ENCODE measurements at regions of chr14 and their contacts with region 1.

Region 1: GRCh38 chr14:23320774-23321571 is at the start of gene PABPN1:
- DNase-seq: peak; percentile 99
- total RNA-seq, gene PABPN1: 82.9 TPM

Region 2: GRCh38 chr14:23034483-23035302 is 286.3 kb before region 1 on chr14 and contains the start of gene PSMB5:
- intact Hi-C with region 1: no loop called
- DNase-seq: peak; percentile 95
- total RNA-seq, gene PSMB5: 120 TPM

Region 3: DNA sequence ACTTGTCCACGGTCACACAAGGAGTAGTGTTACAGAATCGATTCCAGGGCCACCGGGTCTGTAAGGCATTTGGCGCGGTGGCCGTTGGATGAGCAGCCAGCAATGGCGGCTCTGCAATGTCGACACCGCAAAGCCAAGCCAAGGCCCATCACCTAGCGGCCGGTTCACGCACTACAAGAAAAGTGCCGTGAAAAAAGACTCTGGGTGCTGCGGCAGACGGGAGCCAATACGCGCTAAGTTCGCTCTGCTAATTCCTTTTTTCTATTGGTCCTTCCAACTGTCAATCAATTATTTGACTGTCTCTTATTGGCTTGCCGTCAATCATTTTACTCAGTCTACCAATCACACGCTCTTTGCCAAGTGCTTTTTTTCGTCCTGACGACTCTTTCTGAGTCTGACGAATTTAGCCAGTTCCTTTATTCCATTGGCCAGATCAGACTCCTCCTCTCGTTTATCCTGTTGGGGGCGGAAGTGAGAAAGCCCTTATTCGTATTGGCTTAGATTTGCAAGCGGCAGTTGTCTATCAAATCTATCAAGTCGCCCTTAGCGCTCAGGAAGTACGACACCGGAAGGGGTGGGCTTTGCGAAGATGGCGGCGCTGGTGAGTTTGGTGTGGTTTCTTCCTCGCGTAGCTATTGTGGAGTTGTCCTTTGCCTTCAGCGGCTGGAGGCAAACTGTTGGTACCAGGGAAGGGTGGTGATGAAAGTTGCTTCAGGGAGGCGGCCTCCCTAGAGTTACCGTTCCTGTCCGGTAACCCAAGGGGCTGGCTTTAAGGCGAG is 148.3 kb after region 1 on chr14 and contains the start of gene NGDN:
- intact Hi-C with region 1: loop called (anchors 2 kb)
- DNase-seq: peak; percentile 97
- total RNA-seq, gene NGDN: 16.2 TPM